ENCODE measurements at regions of chr18 and their contacts with region 1.

Region 1: DNA sequence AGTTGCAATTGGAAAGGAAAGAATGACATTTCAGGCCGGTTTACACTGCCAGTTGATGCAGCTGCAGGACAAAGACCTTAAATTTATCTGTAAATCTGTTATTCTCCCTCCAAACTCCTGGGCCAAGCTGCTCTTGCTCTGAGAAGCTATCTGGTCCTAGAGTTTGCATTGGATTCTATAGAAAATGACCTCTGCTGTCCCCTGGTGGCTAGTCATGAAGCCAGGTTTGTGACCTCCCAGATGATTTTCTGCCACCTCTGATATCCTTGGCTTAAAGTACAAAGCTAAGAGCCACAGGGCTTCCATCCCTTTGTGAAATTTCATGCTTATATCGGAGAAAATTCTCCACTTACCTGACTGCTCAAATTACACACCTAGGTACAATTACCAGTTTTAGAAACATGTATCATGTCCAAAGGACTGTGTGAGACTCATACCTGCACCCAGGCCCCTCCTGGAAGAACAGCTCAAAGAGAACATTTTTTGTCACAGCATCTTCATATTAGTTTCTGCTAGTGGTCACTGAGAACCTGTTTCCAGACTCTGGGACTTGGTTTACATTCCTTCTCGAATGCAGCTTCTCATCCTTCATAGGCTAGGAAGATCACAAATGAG is 28.9 kb upstream of the IER3IP1 start:
- H3K4me3 ChIP-seq: no peak overlapping the region
- H3K27ac ChIP-seq: no peak overlapping the region
- H3K4me1 ChIP-seq: no peaks in the 10 kb centered on the region
- CTCF ChIP-seq: peak; percentile 32; the same call in 1 of the 2 replicates

Region 2: GRCh38 chr18:47050468-47050867 is 154.5 kb before region 1 on chr18:
- CTCF ChIA-PET with region 1: interaction called, 19 read pairs
- POLR2A ChIA-PET with region 1: no interaction called
- H3K4me3 ChIP-seq: no peak overlapping the region
- H3K27ac ChIP-seq: no peak overlapping the region
- H3K4me1 ChIP-seq: no peaks in the 10 kb centered on the region
- CTCF ChIP-seq: 0 out of 2 replicates have a peak, but pooled peaks have one; percentile 18

Region 3: DNA sequence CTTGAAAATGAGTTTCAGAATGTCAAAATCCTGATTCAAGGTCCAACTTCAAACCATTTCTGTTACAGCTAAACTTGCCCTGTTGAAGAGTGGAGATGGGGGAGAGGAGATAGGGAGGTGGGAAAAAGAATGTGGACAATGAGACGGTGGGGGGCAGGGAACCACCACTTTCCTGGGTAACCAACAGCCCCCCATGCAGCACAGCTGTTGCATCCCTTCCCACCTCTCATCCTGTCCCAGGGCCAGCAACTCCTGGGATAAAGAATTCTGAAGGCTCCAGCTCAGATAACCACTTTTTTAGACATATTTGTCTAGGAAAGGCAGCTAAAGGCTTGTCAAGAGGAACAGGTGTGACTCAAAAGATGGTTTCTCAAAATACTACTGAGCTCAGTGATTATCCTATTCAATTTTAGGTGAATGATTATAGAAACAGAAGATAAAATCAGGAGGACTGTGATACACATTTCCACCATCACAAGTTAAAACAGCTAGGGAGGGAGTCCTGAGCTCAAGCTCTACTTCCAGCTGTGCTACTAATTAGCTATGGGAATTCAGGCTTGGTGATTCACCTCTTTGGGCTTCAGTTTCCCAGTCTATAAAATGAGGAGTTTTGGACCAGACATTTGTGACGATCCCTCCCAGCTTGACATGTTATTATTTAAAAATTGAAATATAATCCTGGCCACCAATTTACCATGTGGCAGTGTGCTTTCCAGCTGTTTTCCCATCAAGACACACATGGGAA is 91.0 kb before region 1 on chr18:
- CTCF ChIA-PET with region 1: interaction called, 28 read pairs
- POLR2A ChIA-PET with region 1: no interaction called
- H3K4me3 ChIP-seq: no peak overlapping the region
- H3K27ac ChIP-seq: no peak overlapping the region
- H3K4me1 ChIP-seq: no peaks in the 10 kb centered on the region
- CTCF ChIP-seq: no peak

Region 4: GRCh38 chr18:47187721-47188120 is 17.3 kb before region 1 on chr18:
- CTCF ChIA-PET with region 1: interaction called, 10 read pairs
- POLR2A ChIA-PET with region 1: no interaction called
- H3K4me3 ChIP-seq: no peak overlapping the region
- H3K27ac ChIP-seq: no peak overlapping the region
- H3K4me1 ChIP-seq: no peaks in the 10 kb centered on the region
- CTCF ChIP-seq: no peak

Region 5: GRCh38 chr18:47748847-47749599 is 544.0 kb after region 1 on chr18:
- CTCF ChIA-PET with region 1: interaction called, 20 read pairs
- POLR2A ChIA-PET with region 1: no interaction called
- H3K4me3 ChIP-seq: peak overlapping the region; percentile 12; the same call in 1 of the 2 replicates
- H3K27ac ChIP-seq: no peak overlapping the region
- H3K4me1 ChIP-seq: no peaks in the 10 kb centered on the region
- CTCF ChIP-seq: peak; percentile 93